Caco-2 (cell line): ENCODE measurements at regions of chr21 and their contacts with region 1.

Region 1: DNA sequence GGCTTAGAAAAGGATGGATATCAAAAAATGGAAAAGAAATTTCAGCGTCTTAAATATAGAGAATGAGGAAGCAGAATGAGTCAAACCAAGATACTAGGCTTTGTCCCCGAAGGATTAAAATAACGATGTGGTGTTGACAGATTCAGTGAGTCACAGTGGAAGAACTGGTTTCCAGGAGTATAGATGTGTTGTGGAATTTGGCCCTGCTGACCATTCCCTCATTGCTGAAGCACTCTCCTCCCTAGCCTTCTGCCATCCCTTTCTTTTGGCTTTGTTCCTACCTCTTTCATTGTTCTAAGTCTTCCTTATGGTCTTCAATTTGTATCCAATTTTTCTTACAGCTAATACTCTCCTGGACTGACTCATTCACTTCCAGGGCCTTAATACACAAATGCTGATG is 23.1 kb upstream of the USP25 start:
- DNase-seq: peak; percentile 74
- H3K4me3 ChIP-seq: no peak overlapping the region
- H3K4me3 Mint-ChIP-seq: peak overlapping the region; percentile 50
- H3K27ac Mint-ChIP-seq: peak overlapping the region; percentile 70
- H3K4me1 ChIP-seq: peaks cover 31% of the 10 kb centered on the region
- H3K4me1 Mint-ChIP-seq: peaks cover 15% of the 10 kb centered on the region
- H3K27me3 ChIP-seq: no peaks in the 10 kb centered on the region
- H3K27me3 Mint-ChIP-seq: no peaks in the 10 kb centered on the region
- CTCF ChIP-seq: no peak

Region 2: DNA sequence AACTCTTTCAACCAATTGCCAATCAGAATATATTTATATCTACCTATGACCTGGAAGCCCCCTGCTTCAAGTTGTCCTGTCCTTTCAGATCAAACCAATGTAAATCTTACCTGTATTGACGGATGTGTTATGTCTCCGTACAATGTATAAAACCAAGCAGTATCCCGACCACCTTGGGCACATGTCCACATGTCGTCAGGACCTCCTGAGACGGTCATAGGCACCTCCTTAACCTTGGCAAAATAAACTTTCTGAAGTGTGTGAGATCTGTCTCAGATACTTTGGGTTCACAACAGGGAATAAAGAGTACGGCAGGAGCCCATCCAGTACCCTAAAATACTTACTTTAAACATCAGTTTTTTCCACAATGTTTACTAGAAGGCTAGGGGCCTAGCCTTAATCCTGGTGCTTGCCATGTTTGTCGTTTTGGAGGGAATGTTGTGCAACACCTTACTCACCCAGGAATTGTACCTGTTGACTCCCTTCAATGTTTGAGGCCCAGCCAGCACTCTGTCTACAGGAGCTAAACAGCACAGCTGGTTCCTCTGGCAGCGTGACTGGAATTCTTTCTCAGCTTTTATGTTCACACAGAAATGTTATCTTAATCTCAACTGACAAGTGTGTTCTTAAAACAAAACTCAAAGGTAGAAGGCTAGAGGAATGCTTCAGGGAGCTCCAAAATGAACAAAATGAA is 67.7 kb before region 1 on chr21:
- CTCF ChIA-PET with region 1: no interaction called
- POLR2A ChIA-PET with region 1: no interaction called
- intact Hi-C with region 1: loop called (anchors 2 kb)
- DNase-seq: peak; percentile 83 to 91
- H3K4me3 ChIP-seq: no peak overlapping the region
- H3K4me3 Mint-ChIP-seq: peak overlapping the region; percentile 56
- H3K27ac Mint-ChIP-seq: peak overlapping the region; percentile 89
- H3K4me1 ChIP-seq: peaks cover 58% of the 10 kb centered on the region
- H3K4me1 Mint-ChIP-seq: peaks cover 38% of the 10 kb centered on the region
- H3K27me3 ChIP-seq: no peaks in the 10 kb centered on the region
- H3K27me3 Mint-ChIP-seq: no peaks in the 10 kb centered on the region
- CTCF ChIP-seq: no peak

Region 3: DNA sequence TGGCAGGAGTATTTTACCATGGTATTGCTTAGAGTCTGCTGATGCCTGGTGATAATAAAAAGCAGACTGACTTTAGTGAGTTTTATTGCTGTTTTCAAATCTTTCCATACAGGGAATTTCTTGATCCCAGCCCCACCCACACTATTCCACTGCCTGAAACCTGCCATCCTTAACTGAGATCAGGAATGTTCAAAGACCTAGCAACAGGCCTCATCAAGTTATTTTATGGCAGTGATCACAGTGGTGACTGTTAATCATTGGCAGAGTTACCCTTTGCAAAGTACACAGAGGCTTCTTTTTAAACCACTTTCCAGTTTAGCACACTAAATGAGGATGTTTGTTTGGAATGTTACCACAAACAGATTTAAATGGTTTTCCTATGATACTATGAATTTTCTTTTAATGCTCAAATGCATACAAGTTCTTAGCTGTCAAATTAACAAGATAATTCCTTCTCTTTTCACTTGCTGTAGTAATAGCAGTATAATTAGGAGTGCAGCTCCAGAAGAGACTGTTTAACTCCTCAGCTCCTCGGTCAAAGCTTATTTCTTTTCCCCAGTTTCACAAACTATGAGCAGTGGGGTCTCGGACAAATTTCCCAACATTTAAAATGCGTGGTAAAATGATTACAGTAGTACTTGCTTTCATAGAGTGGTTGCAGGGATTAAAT is 46.8 kb before region 1 on chr21:
- CTCF ChIA-PET with region 1: no interaction called
- POLR2A ChIA-PET with region 1: no interaction called
- intact Hi-C with region 1: loop called (anchors 1 kb)
- DNase-seq: peak; percentile 72 to 78
- H3K4me3 ChIP-seq: peak overlapping the region; percentile 5; the same call in 1 of the 2 replicates
- H3K4me3 Mint-ChIP-seq: peak overlapping the region; percentile 67
- H3K27ac Mint-ChIP-seq: peak overlapping the region; percentile 95
- H3K4me1 ChIP-seq: peaks cover 34% of the 10 kb centered on the region
- H3K4me1 Mint-ChIP-seq: peaks cover 32% of the 10 kb centered on the region
- H3K27me3 ChIP-seq: no peaks in the 10 kb centered on the region
- H3K27me3 Mint-ChIP-seq: no peaks in the 10 kb centered on the region
- CTCF ChIP-seq: no peak

Region 4: GRCh38 chr21:15722594-15723324 is 16.1 kb after region 1 on chr21:
- CTCF ChIA-PET with region 1: no interaction called
- POLR2A ChIA-PET with region 1: no interaction called
- intact Hi-C with region 1: loop called (anchors 2 kb)
- DNase-seq: peak; percentile 36 to 46
- H3K4me3 ChIP-seq: no peak overlapping the region
- H3K4me3 Mint-ChIP-seq: peak overlapping the region; percentile 42
- H3K27ac Mint-ChIP-seq: peak overlapping the region; percentile 81
- H3K4me1 ChIP-seq: peaks cover 17% of the 10 kb centered on the region
- H3K4me1 Mint-ChIP-seq: peaks cover 14% of the 10 kb centered on the region
- H3K27me3 ChIP-seq: no peaks in the 10 kb centered on the region
- H3K27me3 Mint-ChIP-seq: no peaks in the 10 kb centered on the region
- CTCF ChIP-seq: no peak